Cardiac septum (tissue), 1 donor: ENCODE measurements at regions of chr10 and their contacts with region 1.

Region 1: DNA sequence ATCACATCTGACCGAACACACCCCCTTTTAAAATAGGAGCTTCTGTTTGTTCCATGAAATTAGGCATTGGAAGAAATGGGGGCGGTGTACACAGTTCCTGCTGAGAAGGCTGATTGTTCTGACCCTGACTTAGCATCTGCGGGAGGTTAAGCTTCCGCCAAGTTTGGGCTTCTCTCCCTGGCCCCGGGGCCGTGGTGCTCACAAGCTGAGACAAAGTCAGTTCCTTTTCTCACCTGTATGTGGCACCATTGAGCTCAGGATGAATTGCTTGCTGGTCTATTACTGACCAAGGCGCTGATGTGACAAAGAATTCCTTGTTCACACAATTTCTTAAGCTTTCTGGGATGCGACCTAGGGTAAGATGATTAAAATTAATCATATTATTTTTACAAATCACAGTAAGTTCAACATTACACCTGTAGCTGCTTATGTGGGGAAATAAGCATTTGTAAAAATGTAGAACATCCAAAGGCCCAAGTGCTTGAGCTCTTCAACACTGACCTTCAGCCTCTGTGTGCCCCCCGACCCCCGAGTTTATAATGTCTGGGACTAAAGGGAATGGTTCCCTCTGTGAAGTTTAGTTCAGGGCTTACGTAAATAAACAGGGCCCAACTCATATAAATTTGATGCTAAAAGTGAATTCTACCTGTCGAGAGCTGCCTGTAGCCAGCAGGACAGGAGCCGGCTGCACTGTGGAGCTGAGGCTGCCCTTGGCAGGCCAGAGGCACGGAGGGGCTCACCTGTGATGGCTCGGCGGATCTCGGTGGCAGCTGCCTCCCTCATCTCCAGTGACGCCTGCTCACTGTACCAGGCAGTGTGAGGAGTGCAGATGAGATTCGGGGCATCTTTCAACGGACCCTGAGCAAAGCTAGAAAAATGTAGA is 50.8 kb downstream of the ZRANB1 start:
- DNase-seq: peak; percentile 84

Region 2: GRCh38 chr10:124697830-124698544 is 294.7 kb before region 1 on chr10:
- intact Hi-C with region 1: no loop called
- DNase-seq: no peak

Region 3: GRCh38 chr10:124916585-124917427 is 75.9 kb before region 1 on chr10:
- intact Hi-C with region 1: loop called (anchors 5 kb)
- DNase-seq: peak; percentile 99

Region 4: DNA sequence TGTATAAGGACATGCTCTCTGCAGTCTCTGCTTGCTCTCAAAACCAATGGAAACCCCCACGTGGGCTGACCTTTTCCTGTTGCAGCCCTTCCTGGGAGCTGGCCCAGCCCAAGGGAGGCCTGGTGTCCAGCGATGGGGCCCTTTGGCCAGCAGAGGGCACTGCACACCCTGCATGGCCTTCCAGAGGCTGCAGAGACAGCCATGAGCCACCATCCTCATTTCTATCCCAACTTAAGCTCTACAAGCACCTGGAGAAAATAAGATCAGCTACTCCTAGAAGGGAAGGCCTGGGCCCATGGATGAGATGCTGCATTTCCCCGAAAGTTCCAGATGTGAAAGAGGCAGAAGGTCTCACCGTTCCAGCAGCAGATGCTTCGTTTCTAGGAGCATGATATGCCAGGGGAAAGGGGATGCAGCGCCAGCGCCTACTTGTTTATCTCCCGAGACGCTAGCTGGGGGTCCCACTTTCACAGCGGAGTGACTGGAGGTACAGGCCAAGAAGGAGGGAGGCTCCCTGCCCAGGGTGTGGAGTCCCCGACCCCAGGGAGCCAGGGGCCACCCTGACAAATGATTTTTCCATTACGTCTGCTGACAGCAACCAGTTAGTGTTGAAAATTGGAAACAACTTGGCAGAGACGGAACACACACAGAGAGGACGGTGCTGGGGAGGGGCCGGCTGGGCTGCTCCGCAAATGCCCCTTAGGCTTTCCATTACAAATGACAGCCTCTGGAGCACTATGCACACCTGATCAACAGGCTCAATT is 55.6 kb after region 1 on chr10:
- intact Hi-C with region 1: loop called (anchors 5 kb)
- DNase-seq: peak; percentile 93

Region 5: DNA sequence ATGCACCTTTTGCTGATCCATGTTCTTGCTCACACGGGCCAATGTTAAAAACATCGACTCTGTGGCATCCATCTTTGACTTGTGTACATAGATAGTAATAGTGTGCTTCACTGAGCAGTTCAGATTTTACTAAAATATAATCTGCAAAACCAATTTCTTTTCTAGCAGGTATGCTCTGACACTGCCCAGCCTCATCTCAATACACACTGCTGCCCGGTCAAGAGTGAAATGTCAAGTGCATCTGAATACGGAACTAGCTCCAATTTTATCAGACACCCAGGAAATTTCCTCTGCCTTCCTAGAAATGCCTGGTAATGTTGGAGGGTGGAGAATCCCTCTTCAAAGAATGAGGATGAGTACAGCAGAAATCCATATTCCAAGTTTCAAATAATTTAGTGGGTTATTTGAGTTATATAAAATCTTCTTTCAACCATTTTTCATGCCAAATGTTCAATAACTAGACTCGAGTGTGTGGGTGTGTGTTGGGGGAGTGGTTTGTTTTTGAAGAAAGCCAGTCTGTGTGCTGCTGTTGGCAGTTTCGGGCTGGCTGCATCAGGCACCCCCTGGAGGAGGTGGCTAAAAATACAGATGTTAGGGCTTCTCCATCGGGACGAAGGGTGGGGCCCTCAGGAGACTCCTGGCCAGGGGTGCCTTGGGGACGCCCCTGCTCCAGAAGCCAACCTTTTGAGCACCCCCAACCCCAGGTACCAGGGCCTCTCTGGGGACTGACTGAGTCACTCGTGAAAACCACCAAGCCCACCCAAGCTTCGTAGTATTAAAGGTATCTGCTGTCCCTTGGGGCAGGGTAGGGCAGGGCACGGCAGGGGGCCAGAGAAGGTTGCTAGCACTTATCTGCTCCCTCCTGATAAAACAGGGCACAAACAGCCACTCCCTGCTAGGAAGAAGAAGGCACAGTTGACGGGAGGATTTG is 152.3 kb after region 1 on chr10:
- intact Hi-C with region 1: loop called (anchors 5 kb)
- DNase-seq: no peak

Region 6: GRCh38 chr10:125559210-125559609 is 566.5 kb after region 1 on chr10:
- intact Hi-C with region 1: no loop called
- DNase-seq: no peak